HEK293 (cell line): ENCODE measurements at regions of chr2 and their contacts with region 1.

Region 1: DNA sequence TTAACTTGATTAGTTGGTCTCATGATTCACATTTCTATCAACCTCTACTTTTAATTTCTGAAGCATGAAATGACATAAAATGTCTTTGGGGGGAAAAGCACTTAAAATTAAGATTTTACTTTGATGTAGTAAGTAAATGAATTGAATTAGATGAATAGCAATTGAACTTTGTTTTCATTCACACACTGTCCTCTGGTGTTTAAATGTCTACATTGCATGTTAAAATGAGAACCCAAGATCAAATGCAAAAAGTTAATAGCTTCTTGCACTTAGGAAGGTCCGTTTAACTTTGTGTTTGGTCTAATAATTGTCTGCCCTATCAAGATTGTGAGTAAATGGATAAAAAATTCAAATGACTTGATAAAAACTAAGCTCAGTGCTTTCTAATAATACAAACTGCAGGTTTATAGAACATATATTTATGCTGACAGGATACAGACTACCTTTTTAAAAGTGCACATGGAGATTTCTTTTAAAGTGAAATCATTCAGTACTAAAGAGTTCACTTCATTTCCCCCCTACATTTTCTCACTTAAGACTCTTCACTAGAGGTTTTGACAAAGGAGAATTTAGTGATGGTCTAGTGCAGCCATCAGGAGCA is 156.2 kb upstream of the NABP1 start:
- H3K4me3 ChIP-seq: no peak overlapping the region
- H3K27ac ChIP-seq: no peak overlapping the region
- H3K4me1 ChIP-seq: no peaks in the 10 kb centered on the region
- CTCF ChIP-seq: peak; percentile 60; the same call in 1 of the 2 replicates

Region 2: DNA sequence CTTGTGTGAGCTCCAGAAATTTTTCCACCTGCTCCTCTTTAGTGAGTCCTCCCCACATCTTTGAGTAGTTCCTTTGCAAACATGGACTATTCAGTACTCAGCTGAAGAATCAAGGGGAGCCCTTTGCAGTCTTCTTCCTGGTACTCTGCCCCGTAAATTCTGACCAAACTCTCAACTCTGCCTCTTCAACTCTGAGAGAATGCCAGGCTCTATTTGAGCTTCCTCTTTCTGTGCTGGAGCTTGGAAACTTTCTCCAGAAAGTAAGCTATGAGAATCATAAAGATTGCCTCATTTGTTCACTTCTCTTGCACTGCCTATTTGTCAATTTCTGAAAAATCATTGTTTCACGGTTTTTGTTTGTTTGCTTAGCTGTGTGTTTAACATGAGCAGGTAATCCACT is 363.5 kb before region 1 on chr2:
- CTCF ChIA-PET with region 1: interaction called, 14 read pairs
- POLR2A ChIA-PET with region 1: no interaction called
- H3K4me3 ChIP-seq: no peak overlapping the region
- H3K27ac ChIP-seq: no peak overlapping the region
- H3K4me1 ChIP-seq: peaks cover 2% of the 10 kb centered on the region; the same call in 1 of the 2 replicates
- CTCF ChIP-seq: no peak

Region 3: DNA sequence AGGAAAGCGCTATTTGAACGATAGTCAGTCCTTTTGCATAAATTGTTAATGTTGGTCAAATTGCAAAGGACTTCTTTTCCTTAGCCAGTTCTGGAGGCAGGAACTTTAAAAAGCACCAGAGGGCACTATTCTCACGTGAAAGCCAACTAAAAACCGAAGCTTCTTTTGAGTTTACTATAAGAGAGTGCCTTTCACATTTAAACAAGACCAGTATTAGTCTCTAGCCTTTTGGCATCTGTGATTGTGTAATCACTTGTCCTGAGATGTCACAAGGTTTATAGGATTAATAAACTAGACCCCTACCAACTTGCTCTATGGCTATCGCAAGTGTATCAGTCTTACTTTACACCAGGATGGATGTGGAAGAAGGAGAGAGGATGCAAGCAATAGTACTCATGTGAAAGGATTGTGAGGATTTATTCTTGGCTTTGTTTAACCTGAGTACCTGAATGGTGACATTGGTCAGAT is 356.5 kb before region 1 on chr2:
- CTCF ChIA-PET with region 1: interaction called, 24 read pairs
- POLR2A ChIA-PET with region 1: no interaction called
- H3K4me3 ChIP-seq: no peak overlapping the region
- H3K27ac ChIP-seq: no peak overlapping the region
- H3K4me1 ChIP-seq: peaks cover 10% of the 10 kb centered on the region; the same call in 1 of the 2 replicates
- CTCF ChIP-seq: no peak

Region 4: DNA sequence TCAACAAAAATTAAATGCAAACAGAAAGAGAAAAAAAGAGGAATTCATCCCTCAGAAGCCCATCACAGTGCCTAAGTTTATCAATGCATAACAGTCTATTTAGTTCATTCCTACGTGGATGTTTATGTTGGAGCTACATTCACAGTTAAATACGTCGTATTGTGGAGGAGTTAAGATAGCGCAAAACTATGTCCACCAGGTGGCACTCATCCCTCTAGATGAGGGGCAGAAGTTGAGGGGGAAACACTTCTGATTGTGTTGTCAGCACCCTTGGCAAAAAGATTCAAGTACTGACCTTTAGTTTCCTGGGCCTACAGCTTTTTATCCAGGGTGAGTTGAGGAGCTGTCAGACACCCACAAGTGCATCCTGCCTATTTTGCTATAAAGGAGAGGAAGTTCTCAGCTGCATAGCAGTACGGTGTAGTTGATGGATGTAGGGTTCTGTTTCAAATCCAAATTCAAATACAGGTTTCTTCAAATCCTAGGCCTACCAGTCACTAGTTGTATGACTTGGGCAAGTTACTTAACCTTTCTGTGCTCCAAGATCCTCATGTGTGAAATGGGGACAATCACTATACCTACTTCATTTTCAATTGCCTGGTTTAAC is 303.3 kb before region 1 on chr2:
- CTCF ChIA-PET with region 1: interaction called, 14 read pairs
- POLR2A ChIA-PET with region 1: no interaction called
- H3K4me3 ChIP-seq: no peak overlapping the region
- H3K27ac ChIP-seq: no peak overlapping the region
- H3K4me1 ChIP-seq: no peaks in the 10 kb centered on the region
- CTCF ChIP-seq: peak; percentile 73